ENCODE measurements at regions of chr3 and their contacts with region 1.

Region 1: GRCh38 chr3:153043729-153044328 is 118.2 kb upstream of the RAP2B start:
- DNase-seq: peak; percentile 43
- H3K4me3 ChIP-seq: peak overlapping the region in 2 of 3 experiments; percentile 4 to 11
- H3K27ac ChIP-seq: peak overlapping the region; percentile 68
- H3K4me1 ChIP-seq: peaks cover 12% of the 10 kb centered on the region
- H3K27me3 ChIP-seq: no peaks in the 10 kb centered on the region
- CTCF ChIP-seq: no peak
- POLR2A ChIP-seq: no peak

Region 2: DNA sequence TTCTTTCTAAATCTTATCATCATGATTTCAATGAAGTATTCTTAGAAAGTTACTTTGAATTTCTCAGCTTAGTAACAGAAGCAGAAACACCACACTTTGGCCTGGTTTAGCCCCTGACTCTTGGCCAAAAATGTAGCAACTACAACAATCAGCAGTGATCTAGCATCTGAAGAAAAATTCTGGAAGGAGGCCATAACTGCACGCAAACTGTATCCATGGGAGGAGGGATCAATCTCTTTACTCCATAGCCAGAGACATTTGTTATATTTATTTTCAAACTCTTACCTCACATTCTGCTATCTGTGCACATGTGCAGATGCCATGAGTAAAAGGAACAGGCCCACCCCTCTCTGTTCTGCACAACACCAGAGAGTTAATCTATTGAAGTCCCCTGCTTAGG is 459.9 kb before region 1 on chr3:
- CTCF ChIA-PET with region 1: no interaction called
- POLR2A ChIA-PET with region 1: no interaction called
- dilution Hi-C with region 1: no loop called
- intact Hi-C with region 1: no loop called
- DNase-seq: no peak
- H3K4me3 ChIP-seq: no peak overlapping the region
- H3K27ac ChIP-seq: no peak overlapping the region
- H3K4me1 ChIP-seq: peaks cover 5% of the 10 kb centered on the region
- H3K27me3 ChIP-seq: no peaks in the 10 kb centered on the region
- CTCF ChIP-seq: no peak
- POLR2A ChIP-seq: no peak

Region 3: DNA sequence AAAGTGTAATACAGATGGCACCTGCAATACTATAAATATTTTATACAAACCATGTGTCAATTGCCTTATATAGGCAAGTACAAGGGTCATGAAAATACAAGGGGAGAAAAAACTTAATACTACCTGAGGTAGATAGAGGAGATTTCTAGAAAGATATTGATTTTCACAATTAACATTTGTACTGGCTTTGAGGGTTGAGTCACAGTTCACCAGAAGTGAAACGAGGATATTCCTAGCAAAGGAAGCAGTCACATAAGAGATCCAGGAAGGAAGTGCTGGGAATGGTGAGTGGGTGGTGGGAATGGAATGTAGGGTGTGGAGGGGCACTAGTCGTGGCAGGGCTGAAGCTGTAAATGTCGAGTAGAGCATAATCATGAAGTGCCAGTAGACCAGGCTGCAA is 100.2 kb before region 1 on chr3:
- CTCF ChIA-PET with region 1: no interaction called
- POLR2A ChIA-PET with region 1: no interaction called
- dilution Hi-C with region 1: no loop called
- intact Hi-C with region 1: no loop called
- DNase-seq: peak; percentile 47
- H3K4me3 ChIP-seq: no peak overlapping the region
- H3K27ac ChIP-seq: peak overlapping the region; percentile 47
- H3K4me1 ChIP-seq: peaks cover 17% of the 10 kb centered on the region
- H3K27me3 ChIP-seq: no peaks in the 10 kb centered on the region
- CTCF ChIP-seq: no peak
- POLR2A ChIP-seq: no peak

Region 4: DNA sequence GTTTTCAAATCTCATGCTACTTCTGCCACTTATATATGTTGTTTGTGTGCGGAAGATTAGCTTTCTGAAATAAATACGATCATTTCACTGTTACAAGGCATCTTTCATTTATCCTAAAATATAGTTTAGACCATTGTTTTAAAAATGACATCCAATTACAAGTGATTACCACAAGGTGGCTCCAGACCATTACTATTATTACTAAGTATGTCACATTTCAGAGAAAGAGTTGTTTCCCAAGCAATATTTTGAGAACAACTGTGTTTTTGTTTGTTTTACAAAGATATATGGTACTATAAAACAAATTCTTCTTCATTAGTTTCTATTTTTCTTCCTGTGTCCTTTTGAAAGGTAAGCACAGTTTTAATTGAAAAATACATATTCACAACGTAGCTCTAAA is 17.8 kb before region 1 on chr3:
- CTCF ChIA-PET with region 1: interaction called, 10 read pairs
- POLR2A ChIA-PET with region 1: no interaction called
- dilution Hi-C with region 1: no loop called
- intact Hi-C with region 1: no loop called
- DNase-seq: peak; percentile 53
- H3K4me3 ChIP-seq: no peak overlapping the region
- H3K27ac ChIP-seq: no peak overlapping the region
- H3K4me1 ChIP-seq: peaks cover 8% of the 10 kb centered on the region
- H3K27me3 ChIP-seq: peaks cover 0 to 6% of the 10 kb centered on the region in 2 experiments
- CTCF ChIP-seq: peak; percentile 28 to 35
- POLR2A ChIP-seq: no peak

Region 5: DNA sequence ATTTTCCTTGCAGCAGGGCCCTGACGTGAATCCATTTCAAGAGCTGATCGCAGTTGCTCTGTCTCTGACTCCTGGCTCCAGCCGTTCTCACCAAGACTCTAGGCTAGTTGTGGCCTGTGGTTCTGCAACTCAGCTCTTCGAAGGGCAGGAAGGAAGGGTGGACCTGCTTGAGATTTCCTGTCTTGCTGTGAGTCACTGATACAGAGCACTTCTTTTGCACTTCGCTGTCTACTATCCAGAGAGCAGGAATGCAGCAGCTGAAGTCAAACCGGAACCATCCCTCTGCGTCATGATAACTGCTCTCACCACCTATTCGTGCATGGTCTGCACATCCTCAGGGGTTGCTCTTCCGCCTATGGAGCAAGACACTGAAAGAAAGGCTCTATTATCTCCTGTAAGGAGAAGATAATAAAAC is 177.9 kb after region 1 on chr3:
- CTCF ChIA-PET with region 1: interaction called, 11 read pairs
- POLR2A ChIA-PET with region 1: no interaction called
- dilution Hi-C with region 1: no loop called
- intact Hi-C with region 1: loop called (anchors 1 kb)
- DNase-seq: peak; percentile 95
- H3K4me3 ChIP-seq: peak overlapping the region in 1 of 3 experiments; percentile 39
- H3K27ac ChIP-seq: peak overlapping the region; percentile 70
- H3K4me1 ChIP-seq: peaks cover 29% of the 10 kb centered on the region
- H3K27me3 ChIP-seq: no peaks in the 10 kb centered on the region
- CTCF ChIP-seq: no peak
- POLR2A ChIP-seq: peak; percentile 91

Region 6: DNA sequence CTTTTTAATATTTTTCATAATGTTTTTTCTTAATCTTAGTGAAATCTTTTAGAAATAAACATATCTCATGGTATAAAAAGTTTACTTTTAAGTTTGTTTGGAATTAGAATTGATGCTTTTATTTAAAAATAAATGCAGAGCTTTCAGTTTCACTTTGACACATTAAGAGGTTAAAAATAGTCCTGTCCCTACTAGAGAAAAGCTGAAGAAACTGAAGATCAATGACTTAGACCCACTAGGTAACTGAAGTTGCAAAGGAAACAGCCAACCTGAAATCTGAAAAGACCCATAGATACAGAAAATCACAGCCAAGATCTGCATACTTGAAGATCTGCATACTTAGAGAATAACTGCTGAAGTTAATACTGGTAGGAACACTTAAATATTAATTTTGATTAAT is 355.8 kb after region 1 on chr3:
- CTCF ChIA-PET with region 1: no interaction called
- POLR2A ChIA-PET with region 1: no interaction called
- dilution Hi-C with region 1: no loop called
- intact Hi-C with region 1: loop called (anchors 2 kb)
- DNase-seq: no peak
- H3K4me3 ChIP-seq: no peak overlapping the region
- H3K27ac ChIP-seq: no peak overlapping the region
- H3K4me1 ChIP-seq: no peaks in the 10 kb centered on the region
- H3K27me3 ChIP-seq: no peaks in the 10 kb centered on the region
- CTCF ChIP-seq: no peak
- POLR2A ChIP-seq: no peak

Region 7: GRCh38 chr3:153595186-153595815 is 551.5 kb after region 1 on chr3:
- CTCF ChIA-PET with region 1: interaction called, 20 read pairs
- POLR2A ChIA-PET with region 1: no interaction called
- dilution Hi-C with region 1: no loop called
- intact Hi-C with region 1: loop called (anchors 1 kb)
- DNase-seq: peak; percentile 66
- H3K4me3 ChIP-seq: no peak overlapping the region
- H3K27ac ChIP-seq: no peak overlapping the region
- H3K4me1 ChIP-seq: peaks cover 15% of the 10 kb centered on the region
- H3K27me3 ChIP-seq: no peaks in the 10 kb centered on the region
- CTCF ChIP-seq: peak; percentile 35 to 62
- POLR2A ChIP-seq: no peak

Region 8: GRCh38 chr3:153970741-153971347 is 927.0 kb after region 1 on chr3:
- CTCF ChIA-PET with region 1: interaction called, 17 read pairs
- POLR2A ChIA-PET with region 1: no interaction called
- dilution Hi-C with region 1: no loop called
- intact Hi-C with region 1: loop called (anchors 5 kb)
- DNase-seq: peak; percentile 64
- H3K4me3 ChIP-seq: no peak overlapping the region
- H3K27ac ChIP-seq: no peak overlapping the region
- H3K4me1 ChIP-seq: no peaks in the 10 kb centered on the region
- H3K27me3 ChIP-seq: no peaks in the 10 kb centered on the region
- CTCF ChIP-seq: peak; percentile 23 to 33
- POLR2A ChIP-seq: no peak